ENCODE measurements at regions of chr2 and their contacts with region 1.

Region 1: DNA sequence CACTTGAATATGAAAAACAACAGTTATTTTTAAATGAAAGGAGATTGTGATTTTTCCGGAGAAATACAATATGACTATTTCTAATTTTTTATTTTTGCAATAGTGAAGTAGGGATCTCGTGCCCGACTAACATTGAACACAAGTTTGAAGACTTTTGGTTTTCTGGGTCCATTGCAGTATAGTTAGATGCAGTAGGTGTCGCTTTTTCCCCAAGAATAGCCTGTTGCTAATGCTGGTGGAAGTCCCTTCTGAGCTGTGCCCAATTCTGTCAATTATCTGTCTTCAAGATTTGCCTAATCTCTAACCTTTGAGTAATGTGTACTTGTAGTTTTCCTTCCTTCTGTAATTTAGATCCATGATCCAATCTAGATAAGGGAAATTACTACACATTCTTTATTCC is 36.5 kb downstream of the SEMA4F start:
- DNase-seq: peak; percentile 68
- H3K4me3 ChIP-seq: no peak overlapping the region
- H3K27ac ChIP-seq: no peak overlapping the region
- H3K4me1 ChIP-seq: no peaks in the 10 kb centered on the region; a peak in 1 of 4 replicates
- H3K27me3 ChIP-seq: no peaks in the 10 kb centered on the region
- CTCF ChIP-seq: peak; percentile 92
- EP300 ChIP-seq: no peak
- RAD21 ChIP-seq: peak; percentile 98

Region 2: DNA sequence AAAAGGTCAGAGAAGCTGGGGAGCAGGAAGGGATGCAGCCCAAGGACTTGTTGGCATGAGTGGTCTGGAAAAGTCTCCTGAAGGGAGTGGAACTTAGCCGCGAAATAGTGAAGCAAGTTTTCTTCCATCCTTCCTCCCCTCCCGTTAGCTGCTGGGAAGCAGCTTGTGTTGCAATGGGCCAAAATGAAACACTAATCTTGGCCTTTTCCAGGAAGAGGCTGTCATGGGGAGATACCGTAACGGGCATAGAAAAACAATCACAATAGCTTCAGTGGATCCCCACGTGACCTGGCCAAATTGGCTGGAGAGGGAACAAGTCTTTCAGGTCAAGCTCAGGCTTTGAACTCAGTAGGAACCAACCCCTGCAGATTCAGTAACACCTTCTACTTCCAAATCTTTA is 12.8 kb after region 1 on chr2:
- CTCF ChIA-PET with region 1: interaction called, 12 read pairs
- POLR2A ChIA-PET with region 1: no interaction called
- DNase-seq: no peak
- H3K4me3 ChIP-seq: no peak overlapping the region
- H3K27ac ChIP-seq: no peak overlapping the region
- H3K4me1 ChIP-seq: peaks cover 0 to 2% of the 10 kb centered on the region in 2 experiments; a peak in 1 of 4 replicates
- H3K27me3 ChIP-seq: no peaks in the 10 kb centered on the region
- CTCF ChIP-seq: no peak
- EP300 ChIP-seq: no peak
- RAD21 ChIP-seq: no peak

Region 3: GRCh38 chr2:74864846-74865722 is 174.5 kb after region 1 on chr2:
- CTCF ChIA-PET with region 1: interaction called, 16 read pairs
- POLR2A ChIA-PET with region 1: no interaction called
- DNase-seq: peak; percentile 46
- H3K4me3 ChIP-seq: no peak overlapping the region
- H3K27ac ChIP-seq: no peak overlapping the region; a peak in 1 of 4 replicates
- H3K4me1 ChIP-seq: peaks cover 4 to 49% of the 10 kb centered on the region in 2 experiments; a peak in 3 of 4 replicates
- H3K27me3 ChIP-seq: no peaks in the 10 kb centered on the region
- CTCF ChIP-seq: no peak
- EP300 ChIP-seq: no peak
- RAD21 ChIP-seq: no peak

Region 4: DNA sequence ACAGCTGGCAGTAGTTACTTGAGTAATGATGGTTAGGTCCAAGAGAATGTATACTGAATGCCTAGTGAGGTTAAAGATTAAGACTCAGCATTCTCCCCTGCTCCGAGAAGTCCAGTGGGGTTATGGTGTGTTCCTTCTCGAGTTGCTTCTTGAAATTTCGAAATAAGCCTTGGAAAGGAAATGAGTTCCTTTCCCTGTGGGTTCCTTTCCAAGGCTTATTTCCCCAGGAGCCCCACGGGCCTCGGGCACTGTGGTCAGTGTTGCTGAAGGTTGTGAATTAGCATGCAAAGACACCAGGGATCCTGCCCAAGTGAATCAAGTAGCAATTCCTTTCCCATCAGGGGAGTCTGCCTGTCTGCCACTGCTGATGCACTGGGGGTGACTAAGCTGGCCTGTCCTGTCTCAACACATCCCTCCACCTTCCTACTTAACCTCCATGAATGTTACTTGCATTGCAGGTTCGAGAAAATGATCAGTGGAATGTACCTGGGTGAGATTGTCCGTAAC is 196.9 kb after region 1 on chr2:
- CTCF ChIA-PET with region 1: interaction called, 19 read pairs
- POLR2A ChIA-PET with region 1: no interaction called
- DNase-seq: no peak
- H3K4me3 ChIP-seq: no peak overlapping the region
- H3K27ac ChIP-seq: peak overlapping the region; percentile 16 to 36; a peak in 3 of 4 replicates
- H3K4me1 ChIP-seq: peaks cover 5 to 13% of the 10 kb centered on the region in 2 experiments; a peak in 1 of 4 replicates
- H3K27me3 ChIP-seq: no peaks in the 10 kb centered on the region
- CTCF ChIP-seq: no peak
- EP300 ChIP-seq: no peak
- RAD21 ChIP-seq: no peak

Measured in SK-N-SH (cell line).